AG04449 (cell line): ENCODE measurements at regions of chr6 and their contacts with region 1.

Region 1: GRCh38 chr6:11064836-11065235 is 20.7 kb upstream of the ELOVL2 start:
- DNase-seq: no peak
- H3K4me3 ChIP-seq: no peak overlapping the region
- CTCF ChIP-seq: no peak

Region 2: GRCh38 chr6:10962673-10963072 is 102.2 kb before region 1 on chr6:
- CTCF ChIA-PET with region 1: interaction called, 413 read pairs
- POLR2A ChIA-PET with region 1: no interaction called
- DNase-seq: peak; percentile 83
- H3K4me3 ChIP-seq: no peak overlapping the region
- CTCF ChIP-seq: no peak

Region 3: GRCh38 chr6:11078266-11078665 is 13.4 kb after region 1 on chr6:
- CTCF ChIA-PET with region 1: interaction called, 33 read pairs
- POLR2A ChIA-PET with region 1: no interaction called
- DNase-seq: no peak
- H3K4me3 ChIP-seq: no peak overlapping the region
- CTCF ChIP-seq: no peak

Region 4: DNA sequence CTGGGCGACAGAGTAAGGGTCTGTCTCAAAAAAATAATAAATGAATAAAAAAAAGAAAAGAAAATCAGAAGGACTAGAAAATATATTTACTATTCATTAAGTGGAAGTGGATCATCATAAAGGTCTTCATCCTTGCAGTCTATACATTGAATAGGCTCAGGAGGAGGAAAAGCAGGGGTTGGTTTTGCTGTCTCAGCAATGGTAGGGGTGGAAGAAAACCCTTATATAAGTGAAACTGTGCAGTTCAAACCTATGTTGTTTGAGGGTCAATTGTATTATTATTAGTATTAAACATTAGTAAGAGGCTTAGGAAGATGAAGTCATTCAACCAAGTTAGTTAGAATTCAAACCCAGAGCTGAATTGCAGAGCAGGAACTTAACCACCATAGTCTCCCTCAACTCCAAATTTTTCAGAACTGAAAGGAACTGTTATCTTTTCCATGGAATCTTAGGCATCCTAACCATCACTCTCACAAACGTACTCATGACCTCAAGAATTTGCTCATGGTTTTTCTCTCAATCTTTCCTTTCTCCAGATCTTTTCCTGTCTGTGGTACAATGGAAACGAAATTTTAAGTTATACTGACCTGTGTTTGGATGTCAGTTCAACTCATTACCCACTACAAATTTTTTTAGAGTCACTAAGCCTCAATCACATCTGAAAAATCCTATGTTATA is 21.1 kb after region 1 on chr6:
- CTCF ChIA-PET with region 1: interaction called, 30 read pairs
- POLR2A ChIA-PET with region 1: no interaction called
- DNase-seq: peak; percentile 54
- H3K4me3 ChIP-seq: no peak overlapping the region
- CTCF ChIP-seq: no peak

Region 5: DNA sequence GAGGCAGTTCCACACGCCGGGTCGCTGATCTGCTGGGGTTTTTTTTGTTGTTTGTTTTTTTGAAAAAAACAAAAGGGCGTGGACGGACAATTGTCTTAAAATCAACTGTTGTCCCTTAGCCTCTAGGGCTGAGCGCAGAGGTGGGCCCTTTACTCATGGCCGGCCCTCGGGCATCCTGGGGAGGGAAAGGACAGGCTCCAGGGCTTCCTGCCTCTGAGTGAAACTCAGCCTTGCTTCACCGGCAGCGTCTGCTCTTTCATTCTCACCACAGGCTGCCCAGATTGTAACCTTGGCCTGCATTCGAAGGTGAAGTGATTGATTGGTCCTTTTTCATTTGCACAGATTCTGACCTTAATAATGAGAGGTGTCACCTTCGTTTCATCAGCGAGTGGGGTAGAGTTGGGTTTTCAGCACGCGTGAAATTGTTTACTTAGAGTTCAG is 29.6 kb after region 1 on chr6:
- CTCF ChIA-PET with region 1: interaction called, 15 read pairs
- POLR2A ChIA-PET with region 1: no interaction called
- DNase-seq: no peak
- H3K4me3 ChIP-seq: peak overlapping the region; percentile 100
- CTCF ChIP-seq: no peak